ENCODE measurements at regions of chr2 and their contacts with region 1.

Region 1: GRCh38 chr2:148989882-148990493 is 48.5 kb upstream of the LYPD6B start:
- DNase-seq: peak; percentile 36 to 56
- H3K4me3 ChIP-seq: no peak overlapping the region
- H3K27ac ChIP-seq: no peak overlapping the region
- H3K4me1 ChIP-seq: no peaks in the 10 kb centered on the region
- H3K27me3 ChIP-seq: no peaks in the 10 kb centered on the region
- CTCF ChIP-seq: peak; percentile 73

Region 2: DNA sequence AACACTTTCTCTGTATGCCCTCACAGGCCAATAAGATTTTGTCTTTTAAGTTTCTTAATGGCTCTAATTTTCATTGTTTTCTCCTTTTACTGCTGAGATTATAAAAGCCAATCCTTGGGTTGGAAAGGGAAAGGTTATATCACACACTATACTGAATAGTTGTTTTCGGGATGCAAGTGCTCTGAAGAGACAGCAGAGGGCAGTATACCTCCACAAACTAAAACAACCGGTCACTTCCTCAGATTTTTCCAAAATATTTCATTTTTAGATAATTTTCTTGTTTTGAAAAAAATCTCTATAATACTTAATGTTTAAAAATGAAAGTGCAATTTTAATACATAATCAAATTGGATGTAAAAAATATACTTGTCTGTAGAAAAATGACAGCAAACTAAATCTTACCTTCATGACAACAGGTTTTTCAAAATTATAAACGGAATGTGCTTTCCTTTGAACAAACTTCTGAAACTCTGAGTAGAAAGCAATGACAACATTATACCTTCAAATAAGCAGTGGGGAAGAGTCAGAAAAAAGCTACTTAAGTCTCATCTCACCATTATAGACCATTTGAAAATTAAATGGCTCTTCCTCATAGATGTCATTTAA is 1052.1 kb before region 1 on chr2:
- CTCF ChIA-PET with region 1: no interaction called
- POLR2A ChIA-PET with region 1: no interaction called
- intact Hi-C with region 1: loop called (anchors 2 kb)
- DNase-seq: no peak
- H3K4me3 ChIP-seq: no peak overlapping the region
- H3K27ac ChIP-seq: no peak overlapping the region
- H3K4me1 ChIP-seq: no peaks in the 10 kb centered on the region
- H3K27me3 ChIP-seq: no peaks in the 10 kb centered on the region
- CTCF ChIP-seq: peak; percentile 82

Region 3: DNA sequence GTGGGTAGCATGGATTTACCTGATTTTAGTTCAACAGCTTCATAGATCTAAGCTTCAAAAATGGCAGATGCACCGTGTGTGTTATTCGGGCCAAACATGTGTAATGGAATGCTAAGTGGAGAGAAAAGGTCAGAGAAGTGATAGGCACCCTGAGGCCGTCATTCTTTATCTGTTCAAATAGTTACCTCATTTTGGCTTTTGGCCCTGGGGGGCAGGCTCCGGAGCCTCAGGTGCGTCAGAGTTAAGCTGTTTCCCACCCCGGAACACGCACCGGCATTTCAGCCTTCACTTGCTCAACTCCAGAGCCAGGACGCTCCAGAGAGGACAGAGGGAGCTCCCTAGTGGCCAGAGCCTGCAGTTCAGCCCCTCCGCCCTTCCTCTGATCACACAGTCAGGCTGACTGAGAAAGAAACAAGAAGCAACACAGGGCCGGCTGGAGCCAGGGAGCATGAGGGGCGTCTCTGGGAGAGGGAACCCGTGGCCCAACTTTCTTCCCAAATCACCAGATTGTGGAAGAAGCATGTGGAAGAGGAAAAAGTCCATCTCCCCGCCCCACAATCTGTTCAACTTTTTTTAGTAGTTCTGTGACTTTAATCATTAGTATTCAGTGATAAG is 480.6 kb before region 1 on chr2:
- CTCF ChIA-PET with region 1: no interaction called
- POLR2A ChIA-PET with region 1: no interaction called
- intact Hi-C with region 1: loop called (anchors 1 kb)
- DNase-seq: peak; percentile 63 to 80
- H3K4me3 ChIP-seq: peak overlapping the region; percentile 38; the same call in 1 of the 2 replicates
- H3K27ac ChIP-seq: no peak overlapping the region
- H3K4me1 ChIP-seq: peaks cover 9% of the 10 kb centered on the region
- H3K27me3 ChIP-seq: no peaks in the 10 kb centered on the region
- CTCF ChIP-seq: peak; percentile 79

Region 4: DNA sequence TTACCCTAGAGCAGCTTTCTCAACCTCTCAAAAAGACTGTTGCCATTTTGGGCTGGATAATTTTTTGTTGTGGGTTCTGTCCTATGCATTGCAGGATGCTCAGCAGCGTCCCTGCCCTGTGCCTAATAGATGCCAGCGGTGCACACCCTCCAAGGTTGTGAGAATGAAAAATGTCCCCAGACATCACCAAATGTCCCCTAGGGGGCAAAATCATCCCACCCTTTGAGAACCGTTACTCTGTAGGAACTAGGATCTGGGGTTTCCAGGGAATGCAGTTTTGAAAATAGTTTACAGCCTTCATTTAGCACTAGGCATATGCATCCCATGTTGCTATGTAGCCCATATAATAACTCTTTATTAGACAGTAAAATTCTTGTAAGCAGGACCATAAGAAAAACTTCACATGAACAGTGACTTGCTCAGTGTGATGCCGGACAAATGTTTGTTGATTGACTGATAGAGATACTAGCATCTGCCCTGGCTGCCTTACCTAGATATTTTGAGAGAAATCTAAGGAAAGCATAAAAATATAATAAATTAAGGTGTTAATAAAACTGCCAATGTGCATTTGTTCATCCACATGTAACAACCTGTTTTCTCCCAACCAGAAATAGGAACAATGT is 424.6 kb before region 1 on chr2:
- CTCF ChIA-PET with region 1: no interaction called
- POLR2A ChIA-PET with region 1: no interaction called
- intact Hi-C with region 1: loop called (anchors 5 kb)
- DNase-seq: no peak
- H3K4me3 ChIP-seq: no peak overlapping the region
- H3K27ac ChIP-seq: no peak overlapping the region
- H3K4me1 ChIP-seq: no peaks in the 10 kb centered on the region
- H3K27me3 ChIP-seq: no peaks in the 10 kb centered on the region
- CTCF ChIP-seq: 0 out of 2 replicates have a peak, but pooled peaks have one; percentile 24

Measured in PC-9 (cell line).